Panc1 (cell line): ENCODE measurements at regions of chr16 and their contacts with region 1.

Region 1: GRCh38 chr16:57840833-57841232 is 38.5 kb upstream of the KIFC3 start:
- DNase-seq: no peak
- ATAC-seq: no peak
- H3K4me3 ChIP-seq: no peak overlapping the region
- H3K27ac ChIP-seq: no peak overlapping the region
- H3K4me1 ChIP-seq: no peaks in the 10 kb centered on the region
- H3K27me3 ChIP-seq: no peaks in the 10 kb centered on the region
- CTCF ChIP-seq: no peak

Region 2: DNA sequence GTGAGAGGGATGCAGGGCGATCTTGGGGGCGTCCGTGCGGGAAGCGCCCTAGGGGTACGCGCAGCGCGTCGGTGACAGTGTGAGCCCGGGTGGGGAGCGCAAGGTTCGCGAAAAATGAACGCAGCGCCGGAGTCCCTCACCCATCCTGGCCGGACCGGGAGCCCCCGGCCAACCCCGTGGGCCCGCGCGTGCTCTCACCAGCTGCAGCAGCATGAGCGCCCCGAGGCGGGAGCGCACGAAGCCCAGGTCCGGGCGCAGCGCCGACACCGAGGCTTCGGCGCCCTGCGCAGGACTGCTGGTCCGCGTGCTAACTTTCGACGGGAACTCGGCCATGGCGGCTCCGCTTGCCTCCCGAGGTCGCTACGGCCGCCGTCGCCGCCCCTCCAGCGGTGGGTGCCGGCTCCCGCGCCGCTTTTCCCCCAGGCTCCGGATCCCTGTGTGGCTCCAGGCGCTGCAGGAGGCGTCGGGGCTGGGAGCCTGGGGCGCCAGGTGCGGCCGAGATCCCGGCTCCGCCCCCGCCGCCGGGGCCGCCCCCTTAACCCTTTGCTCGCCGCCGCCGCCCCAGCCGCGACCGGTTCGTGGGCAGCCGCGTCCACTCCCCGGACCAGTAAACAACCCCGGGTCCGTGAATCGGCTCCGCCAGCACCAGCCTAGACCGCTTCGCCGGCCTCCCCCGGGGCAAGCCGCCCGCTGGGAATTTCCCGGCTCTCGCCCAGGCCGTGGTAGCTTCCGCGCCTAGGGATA is 556.5 kb before region 1 on chr16 and contains the start of gene PLLP:
- CTCF ChIA-PET with region 1: no interaction called
- POLR2A ChIA-PET with region 1: interaction called, 12 read pairs
- in situ Hi-C with region 1: no loop called
- intact Hi-C with region 1: no loop called
- DNase-seq: no peak
- ATAC-seq: peak; percentile 84
- H3K4me3 ChIP-seq: peak within 1 kb of the TSS; percentile 56 to 63
- H3K27ac ChIP-seq: no peak within 1 kb of the TSS
- H3K4me1 ChIP-seq: no peaks in the 10 kb centered on the region
- H3K27me3 ChIP-seq: no peaks in the 10 kb centered on the region
- CTCF ChIP-seq: no peak
- total RNA-seq, gene PLLP: 0.72 TPM

Region 3: GRCh38 chr16:57899771-57900661 is 59.2 kb after region 1 on chr16:
- CTCF ChIA-PET with region 1: no interaction called
- POLR2A ChIA-PET with region 1: no interaction called
- in situ Hi-C with region 1: no loop called
- intact Hi-C with region 1: no loop called
- DNase-seq: peak; percentile 36
- ATAC-seq: peak; percentile 74
- H3K4me3 ChIP-seq: no peak overlapping the region
- H3K27ac ChIP-seq: no peak overlapping the region
- H3K4me1 ChIP-seq: no peaks in the 10 kb centered on the region
- H3K27me3 ChIP-seq: no peaks in the 10 kb centered on the region
- CTCF ChIP-seq: peak; percentile 87